GM12878 (cell line): ENCODE measurements at regions of chr10 and their contacts with region 1.

Region 1: DNA sequence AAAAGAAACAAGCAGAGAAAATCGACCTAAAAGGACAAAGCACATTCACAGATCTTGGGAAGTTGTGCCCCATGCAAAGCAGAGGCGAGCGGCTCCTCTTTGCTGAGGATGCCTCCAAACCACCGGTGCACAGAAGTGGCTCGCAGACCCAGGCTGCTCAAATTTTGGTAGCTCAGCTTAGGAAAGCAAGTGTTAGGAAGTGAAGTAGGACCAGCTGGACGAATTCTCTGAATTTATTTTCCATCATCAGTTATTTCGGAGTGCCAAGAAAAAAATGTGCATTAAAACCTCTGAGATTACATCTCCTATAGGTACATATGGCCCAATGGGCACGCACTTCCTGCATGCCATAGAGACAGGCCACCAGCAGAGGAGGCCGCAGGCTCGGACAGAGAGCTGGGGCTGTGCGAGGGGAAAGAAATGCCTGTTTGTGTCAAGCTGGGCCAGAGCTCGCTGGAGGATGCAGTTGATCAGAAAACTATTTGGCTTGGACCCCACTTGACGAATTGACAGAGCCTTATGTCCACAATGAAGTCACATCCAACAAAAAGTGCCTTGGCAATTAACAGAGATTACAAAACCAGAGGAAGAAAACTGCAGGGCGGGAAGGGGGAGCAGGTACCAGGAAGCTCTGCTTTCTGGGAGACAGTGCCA is 122.3 kb upstream of the LYZL2 start:
- DNase-seq: peak; percentile 32
- ATAC-seq: peak; percentile 87
- H3K4me3 ChIP-seq: no peak overlapping the region
- H3K27ac ChIP-seq: peak overlapping the region; percentile 71
- H3K4me1 ChIP-seq: peaks cover 32% of the 10 kb centered on the region
- H3K27me3 ChIP-seq: no peaks in the 10 kb centered on the region
- CTCF ChIP-seq: peak; percentile 80 to 87 (median 81)
- EP300 ChIP-seq: no peak
- POLR2A ChIP-seq: no peak
- RAD21 ChIP-seq: peak; percentile 97

Region 2: DNA sequence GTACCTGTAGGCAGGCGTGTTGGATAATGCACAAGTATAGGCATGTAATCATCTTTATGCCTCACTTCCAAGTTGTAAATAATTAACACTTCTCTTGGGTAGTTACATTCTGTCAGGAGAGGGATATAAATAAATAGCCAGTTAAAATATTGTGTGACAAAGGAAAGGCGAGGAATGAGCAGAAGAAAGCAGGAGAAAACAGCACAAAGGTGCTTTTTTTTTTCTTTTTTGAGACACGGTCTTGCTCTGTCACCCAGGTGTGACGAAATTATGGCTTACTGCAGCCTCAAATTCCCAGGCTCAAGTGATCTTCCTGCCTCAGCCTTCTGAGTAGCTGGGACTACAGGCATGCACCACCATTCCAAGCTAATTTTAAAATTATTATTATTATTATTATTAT is 23.0 kb before region 1 on chr10:
- CTCF ChIA-PET with region 1: interaction called, 16 read pairs
- POLR2A ChIA-PET with region 1: no interaction called
- RAD21 ChIA-PET with region 1: interaction called, 6 read pairs
- SMC1A ChIA-PET with region 1: interaction called, 20 read pairs
- in situ Hi-C with region 1: no loop called
- intact Hi-C with region 1: loop called (anchors 1 kb)
- DNase-seq: no peak
- ATAC-seq: no peak
- H3K4me3 ChIP-seq: no peak overlapping the region
- H3K27ac ChIP-seq: no peak overlapping the region
- H3K4me1 ChIP-seq: peaks cover 8% of the 10 kb centered on the region
- H3K27me3 ChIP-seq: no peaks in the 10 kb centered on the region
- CTCF ChIP-seq: no peak
- EP300 ChIP-seq: no peak
- POLR2A ChIP-seq: no peak
- RAD21 ChIP-seq: no peak

Region 3: GRCh38 chr10:30763918-30764317 is 12.1 kb after region 1 on chr10:
- CTCF ChIA-PET with region 1: interaction called, 10 read pairs
- POLR2A ChIA-PET with region 1: no interaction called
- RAD21 ChIA-PET with region 1: interaction called, 5 read pairs
- SMC1A ChIA-PET with region 1: interaction called, 6 read pairs
- in situ Hi-C with region 1: no loop called
- intact Hi-C with region 1: no loop called
- DNase-seq: no peak
- ATAC-seq: peak; percentile 46; the same call in 1 of the 3 replicates
- H3K4me3 ChIP-seq: no peak overlapping the region
- H3K27ac ChIP-seq: no peak overlapping the region
- H3K4me1 ChIP-seq: peaks cover 10% of the 10 kb centered on the region; the same call in 1 of the 2 replicates
- H3K27me3 ChIP-seq: no peaks in the 10 kb centered on the region
- CTCF ChIP-seq: no peak
- EP300 ChIP-seq: no peak
- POLR2A ChIP-seq: no peak
- RAD21 ChIP-seq: no peak

Region 4: DNA sequence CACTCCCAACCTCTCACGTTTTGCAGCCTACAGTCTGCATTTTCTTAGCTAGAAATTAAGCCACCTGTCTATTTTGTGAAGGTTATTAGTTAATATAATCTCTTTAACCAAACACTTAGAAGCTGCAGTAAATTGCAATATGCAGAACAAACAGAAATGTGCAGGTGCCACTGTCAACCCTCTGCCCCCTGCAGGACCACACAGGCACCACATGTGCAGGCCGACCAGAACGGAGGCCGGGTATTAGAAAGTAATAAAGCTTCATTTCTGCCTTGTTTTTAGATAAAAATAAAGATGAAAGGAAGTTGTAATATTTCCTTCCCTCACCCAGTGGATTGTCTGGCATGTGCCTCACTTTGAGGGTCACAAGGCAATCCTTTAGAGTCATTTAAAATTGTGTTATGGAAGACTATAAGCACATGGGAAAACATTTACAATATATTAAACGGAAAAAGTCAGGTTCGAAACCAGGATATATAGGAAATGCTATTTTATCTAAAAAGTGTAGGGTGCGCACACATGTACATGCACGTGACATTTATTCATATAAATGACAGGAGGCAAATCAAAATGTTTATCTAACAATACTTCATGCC is 1018.6 kb after region 1 on chr10:
- CTCF ChIA-PET with region 1: interaction called, 10 read pairs
- POLR2A ChIA-PET with region 1: no interaction called
- RAD21 ChIA-PET with region 1: interaction called, 3 read pairs
- SMC1A ChIA-PET with region 1: interaction called, 7 read pairs
- in situ Hi-C with region 1: no loop called
- intact Hi-C with region 1: no loop called
- DNase-seq: no peak
- ATAC-seq: peak; percentile 92
- H3K4me3 ChIP-seq: no peak overlapping the region
- H3K27ac ChIP-seq: no peak overlapping the region
- H3K4me1 ChIP-seq: no peaks in the 10 kb centered on the region
- H3K27me3 ChIP-seq: no peaks in the 10 kb centered on the region
- CTCF ChIP-seq: peak; percentile 79 to 88 (median 86)
- EP300 ChIP-seq: no peak
- POLR2A ChIP-seq: no peak
- RAD21 ChIP-seq: peak; percentile 86